Activated naive CD4-positive, alpha-beta T cell treated with anti-CD3 and anti-CD28 coated beads for 36 hours (primary cell): ENCODE measurements at regions of chrX and their contacts with region 1.

Region 1: GRCh38 chrX:56729152-56729850 is at the start of gene NBDY:
- DNase-seq: peak; percentile 41
- H3K4me3 Mint-ChIP-seq: peak within 1 kb of the TSS; percentile 89
- H3K27ac Mint-ChIP-seq: peak within 1 kb of the TSS; percentile 94
- H3K4me1 Mint-ChIP-seq: peaks cover 22% of the 10 kb centered on the region
- H3K27me3 Mint-ChIP-seq: no peaks in the 10 kb centered on the region
- total RNA-seq, gene NBDY: 45.8 to 46.3 TPM

Region 2: DNA sequence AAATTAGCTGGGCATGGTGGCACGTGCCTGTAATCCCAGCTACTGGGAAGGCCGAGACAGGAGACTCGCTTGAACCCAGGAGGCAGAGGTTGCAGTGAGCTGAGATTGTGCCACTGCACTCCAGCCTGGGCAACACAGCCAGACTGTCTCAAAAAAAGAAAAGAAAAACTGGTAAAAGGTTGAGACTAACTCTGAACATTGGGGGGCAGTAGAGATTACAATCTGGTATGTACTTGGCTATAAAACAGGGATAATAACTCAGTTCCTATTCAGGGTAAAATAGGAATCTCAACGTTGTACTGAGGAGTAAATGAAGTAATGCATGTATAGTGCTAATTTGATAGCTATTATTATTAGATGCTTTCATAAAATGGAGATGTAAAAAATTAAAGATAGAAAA is 509.6 kb before region 1 on chrX:
- CTCF ChIA-PET with region 1: no interaction called
- intact Hi-C with region 1: loop called (anchors 2 kb)
- DNase-seq: no peak
- H3K4me3 Mint-ChIP-seq: no peak overlapping the region
- H3K27ac Mint-ChIP-seq: no peak overlapping the region
- H3K4me1 Mint-ChIP-seq: no peaks in the 10 kb centered on the region
- H3K27me3 Mint-ChIP-seq: no peaks in the 10 kb centered on the region

Region 3: DNA sequence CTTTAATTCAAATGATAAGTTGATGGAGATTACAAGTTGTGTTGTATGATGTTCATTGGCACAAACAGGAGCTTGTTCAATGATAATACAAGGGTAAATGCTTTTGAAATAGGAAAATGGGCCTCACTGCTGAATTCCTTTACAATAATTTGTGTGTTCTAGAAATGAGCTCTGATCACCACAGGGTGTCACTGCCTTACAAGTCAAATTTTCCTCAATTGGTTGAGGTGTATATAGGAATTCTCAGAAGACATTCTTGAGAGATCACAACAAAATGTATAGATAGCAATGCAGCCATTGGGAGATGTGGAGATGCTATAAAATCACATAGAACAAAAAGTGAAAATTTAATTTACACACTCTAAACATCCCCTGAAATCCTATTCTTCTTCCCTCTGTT is 447.5 kb before region 1 on chrX:
- CTCF ChIA-PET with region 1: interaction called, 56 read pairs
- intact Hi-C with region 1: loop called (anchors 1 kb)
- DNase-seq: peak; percentile 32
- H3K4me3 Mint-ChIP-seq: no peak overlapping the region
- H3K27ac Mint-ChIP-seq: no peak overlapping the region
- H3K4me1 Mint-ChIP-seq: peaks cover 10% of the 10 kb centered on the region
- H3K27me3 Mint-ChIP-seq: no peaks in the 10 kb centered on the region

Region 4: DNA sequence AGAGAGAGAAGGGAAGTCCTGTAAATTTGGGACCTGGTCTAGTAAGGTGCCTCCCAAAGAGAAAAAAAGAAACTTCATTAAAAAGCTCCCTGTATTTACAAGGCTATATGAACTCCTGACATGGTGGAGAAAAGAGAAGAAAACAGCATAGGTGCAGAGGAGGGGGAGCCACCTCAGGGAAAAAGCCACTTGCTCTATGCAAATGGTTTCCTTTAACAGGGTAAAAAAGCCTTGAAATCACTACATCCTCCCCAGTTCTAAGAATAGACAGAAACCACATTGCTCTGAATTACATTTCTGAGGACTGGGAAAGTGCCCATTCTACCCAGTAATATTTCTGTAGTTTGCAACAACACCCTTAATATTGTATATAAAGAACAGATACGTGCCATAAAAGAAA is 331.7 kb before region 1 on chrX:
- CTCF ChIA-PET with region 1: no interaction called
- intact Hi-C with region 1: loop called (anchors 5 kb)
- DNase-seq: peak; percentile 56
- H3K4me3 Mint-ChIP-seq: peak overlapping the region; percentile 60
- H3K27ac Mint-ChIP-seq: peak overlapping the region; percentile 91
- H3K4me1 Mint-ChIP-seq: peaks cover 62% of the 10 kb centered on the region
- H3K27me3 Mint-ChIP-seq: no peaks in the 10 kb centered on the region

Region 5: DNA sequence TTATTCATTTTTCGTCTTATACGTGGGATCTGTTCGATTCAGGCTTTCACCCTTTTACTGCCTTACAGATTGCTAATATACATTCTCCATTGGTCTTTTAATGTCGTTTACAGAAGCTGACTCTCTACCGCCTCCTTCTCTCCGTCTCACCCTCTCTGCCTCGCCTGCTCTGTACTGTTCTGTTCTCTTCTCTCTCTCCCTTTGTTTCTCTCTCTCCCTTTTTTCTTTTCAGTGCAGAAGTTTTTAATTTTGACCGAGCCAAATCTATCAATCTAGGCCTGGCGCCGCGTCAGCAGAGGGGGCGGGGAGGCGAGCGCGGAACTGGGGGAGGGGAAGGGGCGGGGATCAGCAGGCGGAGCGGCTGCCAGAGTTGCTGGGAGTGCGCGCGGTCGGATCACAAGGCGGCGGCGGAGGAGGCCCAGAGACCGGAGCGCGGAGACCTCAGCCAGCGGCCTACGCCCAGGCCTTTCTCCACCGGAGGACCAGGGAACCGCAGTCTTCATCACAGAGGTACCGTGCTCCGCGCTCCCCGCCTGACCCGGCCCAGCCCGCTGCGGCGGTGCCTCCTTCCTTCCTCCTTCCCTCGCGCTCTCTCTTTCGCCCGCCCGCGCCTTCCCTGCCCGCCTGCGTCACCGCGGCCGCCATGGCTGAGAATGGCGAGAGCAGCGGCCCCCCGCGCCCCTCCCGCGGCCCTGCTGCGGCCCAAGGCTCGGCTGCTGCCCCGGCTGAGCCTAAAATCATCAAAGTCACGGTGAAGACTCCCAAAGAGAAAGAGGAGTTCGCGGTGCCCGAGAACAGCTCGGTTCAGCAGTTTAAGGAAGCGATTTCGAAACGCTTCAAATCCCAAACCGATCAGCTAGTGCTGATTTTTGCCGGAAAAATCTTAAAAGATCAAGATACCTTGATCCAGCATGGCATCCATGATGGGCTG is 165.8 kb before region 1 on chrX and contains the start of gene UBQLN2:
- CTCF ChIA-PET with region 1: interaction called, 4 read pairs
- intact Hi-C with region 1: loop called (anchors 2 kb)
- DNase-seq: peak; percentile 81
- H3K4me3 Mint-ChIP-seq: peak within 1 kb of the TSS; percentile 91
- H3K27ac Mint-ChIP-seq: peak within 1 kb of the TSS; percentile 100
- H3K4me1 Mint-ChIP-seq: peaks cover 1% of the 10 kb centered on the region
- H3K27me3 Mint-ChIP-seq: no peaks in the 10 kb centered on the region
- total RNA-seq, gene UBQLN2: 67.2 to 67.3 TPM

Region 6: DNA sequence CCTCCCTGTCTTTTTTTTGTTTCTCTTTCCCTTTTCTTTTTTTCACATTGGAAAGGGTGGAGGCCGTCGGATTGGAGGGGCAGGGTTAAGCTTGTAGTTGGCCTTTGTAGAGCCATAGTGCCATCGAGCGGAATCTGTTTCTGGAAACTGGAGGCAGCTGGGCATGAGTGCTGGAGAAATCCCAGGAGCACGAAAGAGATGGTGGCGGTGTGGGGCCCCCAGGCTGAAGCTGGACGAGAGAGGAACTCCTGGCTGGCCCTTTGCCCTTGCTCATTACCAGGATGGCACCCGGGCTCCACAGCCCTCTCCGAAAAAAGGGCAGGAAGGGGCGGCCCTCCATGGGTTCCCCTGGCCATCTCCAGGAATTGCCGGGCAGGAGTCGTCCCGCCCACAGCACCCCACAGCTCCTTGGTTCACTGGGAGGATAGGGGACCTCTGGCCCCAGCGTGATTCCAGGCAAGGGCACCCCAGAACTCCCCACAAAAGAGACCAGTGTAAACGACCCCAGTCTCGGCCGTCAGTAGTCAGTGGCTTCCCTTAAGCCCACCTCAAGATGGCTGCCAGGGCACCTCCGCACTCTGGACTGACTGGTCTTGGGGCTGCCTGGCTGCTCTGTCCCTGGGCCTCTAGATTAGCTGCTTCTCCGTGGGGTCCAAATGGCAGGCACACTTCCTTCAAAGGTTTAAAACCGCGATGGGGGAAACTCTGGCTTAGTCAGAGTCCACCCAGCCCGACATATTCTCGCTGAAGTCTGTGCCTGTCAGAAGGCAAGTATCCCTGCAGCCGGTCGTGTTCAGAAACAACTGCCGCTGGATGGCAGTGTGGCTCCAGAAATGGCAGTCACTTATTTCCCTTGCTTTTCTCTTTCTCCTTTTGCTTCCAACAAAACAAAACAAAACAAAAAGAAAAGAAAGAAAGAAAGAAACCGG is 73.9 kb after region 1 on chrX:
- CTCF ChIA-PET with region 1: interaction called, 3 read pairs
- intact Hi-C with region 1: loop called (anchors 1 kb)
- DNase-seq: peak; percentile 71
- H3K4me3 Mint-ChIP-seq: peak overlapping the region; percentile 32
- H3K27ac Mint-ChIP-seq: no peak overlapping the region
- H3K4me1 Mint-ChIP-seq: peaks cover 45% of the 10 kb centered on the region
- H3K27me3 Mint-ChIP-seq: no peaks in the 10 kb centered on the region

Region 7: DNA sequence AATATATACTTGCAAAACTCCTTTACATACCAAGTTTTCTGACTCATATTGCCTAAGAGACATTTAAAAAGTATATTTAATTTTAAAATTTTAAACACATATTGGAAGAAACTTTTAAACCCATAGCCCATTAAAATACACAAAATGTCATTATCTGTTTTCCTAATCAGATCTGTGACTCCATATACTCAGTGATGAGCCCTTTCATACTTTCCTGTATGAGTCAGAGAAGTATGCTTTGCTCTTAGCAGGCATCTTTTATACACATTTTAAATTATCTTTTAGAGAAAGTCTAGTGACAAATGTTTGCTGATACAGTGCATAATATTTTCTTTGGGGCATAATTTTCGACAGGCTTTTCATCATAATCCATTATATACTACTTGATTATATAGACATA is 239.7 kb after region 1 on chrX:
- CTCF ChIA-PET with region 1: no interaction called
- intact Hi-C with region 1: no loop called
- DNase-seq: no peak
- H3K4me3 Mint-ChIP-seq: no peak overlapping the region
- H3K27ac Mint-ChIP-seq: no peak overlapping the region
- H3K4me1 Mint-ChIP-seq: peaks cover 6% of the 10 kb centered on the region
- H3K27me3 Mint-ChIP-seq: no peaks in the 10 kb centered on the region